Psoas muscle (tissue), 8 donors: ENCODE measurements at regions of chr3 and their contacts with region 1.

Region 1: GRCh38 chr3:54853573-54854404 is 74.1 kb downstream of the LRTM1 start:
- DNase-seq: peak; percentile 78 to 89
- ATAC-seq: peak; percentile 91 to 97 (median 94)
- H3K4me3 ChIP-seq: no peak overlapping the region
- H3K27ac ChIP-seq: no peak overlapping the region
- H3K4me1 ChIP-seq: peaks cover 4% of the 10 kb centered on the region
- H3K27me3 ChIP-seq: no peaks in the 10 kb centered on the region
- CTCF ChIP-seq: peak; percentile 92

Region 2: DNA sequence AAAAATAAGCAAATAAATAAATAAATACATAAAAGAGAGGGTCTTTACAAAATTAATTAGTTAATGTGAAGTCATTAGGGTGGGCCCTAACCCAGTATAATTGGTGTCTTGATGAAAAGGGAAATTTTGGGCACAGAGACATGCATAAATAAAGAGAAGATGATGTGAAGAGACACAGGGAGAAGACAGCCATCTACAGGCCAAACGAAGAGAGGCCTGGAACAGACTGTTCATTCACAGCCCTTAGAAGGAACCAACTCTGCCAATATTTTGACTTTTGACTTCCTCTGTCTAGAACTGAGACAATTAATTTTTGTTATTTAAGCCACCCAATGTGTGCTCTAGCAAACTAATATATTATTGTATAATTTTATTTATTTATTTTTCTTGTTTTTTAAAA is 932.5 kb before region 1 on chr3:
- intact Hi-C with region 1: no loop called
- DNase-seq: no peak
- ATAC-seq: no peak
- H3K4me3 ChIP-seq: no peak overlapping the region
- H3K27ac ChIP-seq: no peak overlapping the region
- H3K4me1 ChIP-seq: no peaks in the 10 kb centered on the region
- H3K27me3 ChIP-seq: no peaks in the 10 kb centered on the region
- CTCF ChIP-seq: no peak

Region 3: GRCh38 chr3:54427941-54428871 is 425.6 kb before region 1 on chr3:
- intact Hi-C with region 1: loop called in 1 of 2 experiments (anchors 5 kb)
- DNase-seq: peak; percentile 15 to 63
- ATAC-seq: peak; percentile 57 to 87 (median 64)
- H3K4me3 ChIP-seq: no peak overlapping the region
- H3K27ac ChIP-seq: no peak overlapping the region
- H3K4me1 ChIP-seq: peaks cover 5% of the 10 kb centered on the region
- H3K27me3 ChIP-seq: no peaks in the 10 kb centered on the region
- CTCF ChIP-seq: peak; percentile 79

Region 4: DNA sequence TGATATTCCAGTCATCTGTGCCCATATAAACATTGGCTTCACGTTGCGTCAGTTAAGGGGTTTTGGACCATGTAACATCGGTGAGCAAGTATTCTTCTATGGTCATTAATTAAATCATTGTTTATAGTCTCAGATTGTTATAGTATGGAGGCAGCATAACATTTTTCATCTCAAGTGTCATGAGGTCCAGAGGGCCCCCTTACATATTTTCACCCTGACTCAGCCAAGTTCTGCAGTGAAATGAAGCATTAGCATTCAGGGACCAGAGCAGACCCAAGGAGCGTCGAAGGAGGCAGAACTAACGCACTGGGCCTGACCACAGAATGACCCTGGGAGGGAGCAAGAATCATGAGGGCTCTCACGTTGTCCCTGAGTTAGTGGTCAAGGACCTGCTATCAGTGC is 97.5 kb before region 1 on chr3:
- intact Hi-C with region 1: no loop called
- DNase-seq: no peak
- ATAC-seq: no peak
- H3K4me3 ChIP-seq: no peak overlapping the region
- H3K27ac ChIP-seq: no peak overlapping the region
- H3K4me1 ChIP-seq: no peaks in the 10 kb centered on the region
- H3K27me3 ChIP-seq: no peaks in the 10 kb centered on the region
- CTCF ChIP-seq: no peak

Region 5: GRCh38 chr3:54891548-54892120 is 37.8 kb after region 1 on chr3:
- intact Hi-C with region 1: no loop called
- DNase-seq: peak; percentile 78 to 91
- ATAC-seq: peak; percentile 97 to 99 (median 98)
- H3K4me3 ChIP-seq: no peak overlapping the region
- H3K27ac ChIP-seq: peak overlapping the region; percentile 82
- H3K4me1 ChIP-seq: peaks cover 22% of the 10 kb centered on the region
- H3K27me3 ChIP-seq: no peaks in the 10 kb centered on the region
- CTCF ChIP-seq: peak; percentile 56

Region 6: GRCh38 chr3:55180936-55181535 is 327.2 kb after region 1 on chr3:
- intact Hi-C with region 1: loop called (anchors 5 kb)
- DNase-seq: no peak
- ATAC-seq: peak in 1 of 4 donors; percentile 53
- H3K4me3 ChIP-seq: no peak overlapping the region
- H3K27ac ChIP-seq: no peak overlapping the region
- H3K4me1 ChIP-seq: no peaks in the 10 kb centered on the region
- H3K27me3 ChIP-seq: no peaks in the 10 kb centered on the region
- CTCF ChIP-seq: peak; percentile 79

Region 7: DNA sequence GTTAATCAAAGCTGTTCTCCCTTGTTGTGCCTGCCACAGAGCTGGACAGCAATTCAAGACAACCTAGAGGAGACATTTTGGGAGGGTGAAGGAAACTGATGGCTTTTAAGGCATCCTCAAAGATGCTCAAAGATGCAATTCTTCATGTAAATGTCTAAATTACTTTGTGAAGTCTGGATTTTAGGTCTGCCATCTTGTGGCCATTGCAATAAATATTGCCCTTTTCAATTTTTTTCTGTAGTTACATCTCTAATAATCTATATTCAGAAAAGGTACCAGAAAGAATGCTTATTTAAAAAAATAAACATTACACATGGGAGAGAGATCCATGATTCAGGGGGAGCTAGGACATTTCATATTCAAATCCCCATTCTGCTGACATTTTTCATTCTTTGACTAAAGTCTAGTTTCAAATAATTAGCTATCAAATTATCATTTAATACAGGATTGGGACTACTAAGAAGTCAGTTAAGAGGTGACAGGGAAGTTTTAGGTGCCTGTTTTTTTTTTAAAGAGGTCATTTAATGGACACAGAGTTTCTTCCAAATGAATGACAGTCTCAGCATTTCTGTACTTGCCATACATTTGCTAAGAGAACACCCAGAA is 893.1 kb after region 1 on chr3:
- intact Hi-C with region 1: loop called in 1 of 2 experiments (anchors 10 kb)
- DNase-seq: no peak
- ATAC-seq: no peak
- H3K4me3 ChIP-seq: no peak overlapping the region
- H3K27ac ChIP-seq: no peak overlapping the region
- H3K4me1 ChIP-seq: no peaks in the 10 kb centered on the region
- H3K27me3 ChIP-seq: no peaks in the 10 kb centered on the region
- CTCF ChIP-seq: peak; percentile 38

Region 8: DNA sequence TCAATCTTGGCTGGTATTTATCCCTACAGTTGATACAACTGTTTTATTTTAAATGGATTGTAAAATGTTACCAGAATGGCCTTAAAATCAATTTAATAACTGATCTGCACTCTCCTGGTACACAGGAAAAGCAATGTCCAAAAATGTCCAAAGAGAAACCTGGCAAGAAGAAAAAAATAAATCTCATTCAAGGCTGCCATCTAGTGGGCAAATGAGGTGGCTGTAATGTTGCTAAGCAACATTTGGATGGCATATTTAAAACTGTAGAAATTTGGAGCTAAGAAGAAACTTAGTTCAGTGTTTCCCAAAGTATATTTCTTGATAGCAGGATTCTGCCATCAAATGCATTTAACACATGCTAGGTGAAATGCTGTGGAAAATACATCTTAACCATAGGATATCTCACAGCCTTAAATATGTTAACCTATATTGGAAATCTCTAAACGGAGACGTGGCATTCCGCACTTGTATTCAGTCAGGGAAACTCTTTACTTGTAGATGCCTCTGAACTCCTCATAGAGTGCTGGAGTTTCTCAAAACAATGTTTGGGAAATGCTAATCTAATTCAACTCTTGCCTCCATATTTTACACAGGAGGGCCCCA is 1397.7 kb after region 1 on chr3:
- intact Hi-C with region 1: loop called in 1 of 2 experiments (anchors 10 kb)
- DNase-seq: no peak
- ATAC-seq: peak in 2 of 4 donors; percentile 44 to 60
- H3K4me3 ChIP-seq: no peak overlapping the region
- H3K27ac ChIP-seq: no peak overlapping the region
- H3K4me1 ChIP-seq: no peaks in the 10 kb centered on the region
- H3K27me3 ChIP-seq: no peaks in the 10 kb centered on the region
- CTCF ChIP-seq: peak; percentile 81